GM18951 (cell line): ENCODE measurements at regions of chr4 and their contacts with region 1.

Region 1: DNA sequence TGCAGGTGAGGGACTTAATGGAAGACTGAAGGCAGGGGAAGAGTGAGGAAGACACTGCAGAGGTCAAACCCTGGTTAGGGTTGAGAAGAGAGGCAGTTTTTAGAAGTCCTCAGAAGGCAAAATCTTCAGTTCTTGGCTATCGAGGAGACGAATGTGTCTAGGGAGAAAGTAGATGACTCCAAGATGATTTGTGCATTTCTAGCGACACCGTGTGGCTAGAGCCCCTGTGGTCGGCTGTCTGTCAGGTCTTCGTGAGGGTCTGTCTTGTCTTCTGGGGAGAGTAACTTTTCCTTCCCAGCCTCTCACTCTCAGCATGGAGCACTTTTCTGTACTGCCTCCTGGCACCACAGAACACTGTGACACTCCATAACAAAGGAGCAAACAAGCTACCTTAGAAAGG is 458.1 kb downstream of the STIM2 start:
- POLR2A ChIP-seq: no peak

Region 2: DNA sequence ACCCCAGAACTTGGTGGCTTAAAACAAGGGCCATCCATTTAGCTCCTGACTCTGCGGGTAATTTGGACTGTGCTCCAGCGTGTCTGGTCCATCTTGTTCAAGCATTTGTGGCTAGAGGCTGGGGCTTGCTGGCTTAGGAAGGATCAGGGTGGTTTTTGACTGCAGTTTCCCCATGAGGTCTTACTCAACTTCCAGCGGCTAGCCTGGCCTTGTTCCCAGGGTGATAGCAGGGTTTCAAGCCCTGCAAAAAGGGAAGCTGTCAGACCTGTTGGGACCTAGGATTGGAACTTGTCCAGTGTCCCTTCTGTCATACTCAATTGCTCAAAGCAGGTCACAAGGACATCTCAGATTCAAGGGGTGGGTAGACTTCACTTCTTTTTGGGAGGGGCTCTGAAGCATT is 252.1 kb before region 1 on chr4:
- in situ Hi-C with region 1: loop called (anchors 25 kb)
- POLR2A ChIP-seq: no peak

Region 3: DNA sequence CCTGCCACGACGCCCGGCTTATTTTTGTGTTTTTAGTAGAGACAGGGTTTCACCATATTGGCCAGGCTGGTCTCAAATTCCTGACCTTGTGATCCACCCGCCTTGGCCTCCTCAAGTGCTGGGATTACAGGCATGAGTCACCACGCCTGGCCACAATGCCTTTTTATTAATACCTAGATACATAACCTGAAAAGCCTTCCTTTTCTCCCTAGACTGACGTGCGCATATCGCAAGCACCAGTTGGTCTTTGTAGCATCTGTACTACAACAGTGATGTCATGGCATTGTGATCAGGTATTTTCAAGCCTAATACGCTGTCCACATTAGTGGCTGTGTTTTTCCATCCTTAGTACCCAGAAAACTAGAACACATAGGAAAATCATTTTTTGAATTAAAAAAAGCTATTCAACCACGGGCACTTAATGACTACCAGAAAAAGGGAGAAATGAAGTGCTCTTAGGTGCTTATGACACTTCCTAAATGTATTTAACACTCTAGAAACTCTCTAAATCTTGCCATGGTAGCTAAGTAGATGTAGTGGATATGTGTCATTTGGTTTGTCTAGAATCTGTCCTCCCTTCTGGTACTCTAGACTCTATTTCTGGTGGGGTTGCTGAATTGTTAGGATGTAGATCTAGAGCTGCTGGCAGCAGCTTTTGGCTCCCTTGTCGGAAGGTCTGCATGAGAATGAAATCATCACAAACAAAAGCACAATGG is 249.7 kb after region 1 on chr4:
- in situ Hi-C with region 1: no loop called
- POLR2A ChIP-seq: no peak